ENCODE measurements at regions of chr16 and their contacts with region 1.

Region 1: DNA sequence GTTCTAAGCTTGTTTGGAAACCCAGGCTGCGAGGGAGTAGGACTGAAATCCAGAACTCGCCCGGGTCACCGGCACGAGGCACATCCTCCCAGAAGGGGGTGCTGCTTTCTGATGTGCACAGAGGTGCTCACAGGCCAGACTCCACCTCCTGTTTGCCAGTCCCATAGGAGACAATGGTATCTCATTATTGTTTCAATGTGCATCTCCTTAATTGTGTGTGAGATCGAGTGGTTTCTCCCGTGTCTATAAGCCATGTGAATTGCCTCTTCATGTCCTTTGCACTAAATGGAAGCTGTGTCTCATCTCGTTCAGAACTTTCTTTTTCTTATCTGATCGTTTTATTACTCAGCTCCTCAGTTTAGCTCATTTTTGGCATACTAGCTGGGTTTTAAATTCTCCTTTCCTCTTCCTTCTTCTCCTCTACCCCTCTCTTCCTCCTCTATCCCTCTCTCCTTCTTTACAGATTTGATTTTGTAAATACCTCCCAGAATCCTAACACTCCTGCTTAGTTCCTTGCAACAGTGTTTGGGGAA is 32.1 kb upstream of the PRKCB start:
- DNase-seq: no peak
- H3K4me3 ChIP-seq: no peak overlapping the region
- CTCF ChIP-seq: peak; percentile 33

Region 2: DNA sequence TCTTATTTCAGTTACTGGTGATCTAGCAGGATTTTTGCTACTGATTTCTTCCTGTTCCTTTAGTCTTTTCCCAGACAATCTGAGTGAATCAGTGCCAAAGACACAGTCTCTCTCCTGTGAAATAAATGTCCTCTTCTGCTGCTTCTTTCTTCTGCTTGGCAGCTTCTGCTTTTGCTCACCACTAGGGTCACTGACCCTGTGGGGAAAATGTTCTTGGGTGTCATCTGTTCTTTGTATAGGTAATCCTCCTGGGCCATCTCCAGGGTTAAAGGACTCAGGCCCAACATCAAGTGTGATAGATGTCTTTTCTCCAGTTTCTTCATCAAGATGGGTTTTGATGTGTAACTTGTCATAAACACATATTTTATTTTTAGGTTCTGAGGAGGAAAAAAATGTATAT is 167.7 kb before region 1 on chr16:
- CTCF ChIA-PET with region 1: no interaction called
- POLR2A ChIA-PET with region 1: no interaction called
- DNase-seq: no peak
- H3K4me3 ChIP-seq: no peak overlapping the region
- CTCF ChIP-seq: no peak

Region 3: GRCh38 chr16:24010440-24011089 is 206.9 kb after region 1 on chr16:
- CTCF ChIA-PET with region 1: interaction called, 15 read pairs
- POLR2A ChIA-PET with region 1: interaction called, 3 read pairs
- DNase-seq: peak; percentile 3
- H3K4me3 ChIP-seq: no peak overlapping the region
- CTCF ChIP-seq: peak; percentile 53

Region 4: GRCh38 chr16:24036614-24037013 is 233.0 kb after region 1 on chr16:
- CTCF ChIA-PET with region 1: interaction called, 39 read pairs
- POLR2A ChIA-PET with region 1: no interaction called
- DNase-seq: no peak
- H3K4me3 ChIP-seq: no peak overlapping the region
- CTCF ChIP-seq: peak; percentile 75

Region 5: DNA sequence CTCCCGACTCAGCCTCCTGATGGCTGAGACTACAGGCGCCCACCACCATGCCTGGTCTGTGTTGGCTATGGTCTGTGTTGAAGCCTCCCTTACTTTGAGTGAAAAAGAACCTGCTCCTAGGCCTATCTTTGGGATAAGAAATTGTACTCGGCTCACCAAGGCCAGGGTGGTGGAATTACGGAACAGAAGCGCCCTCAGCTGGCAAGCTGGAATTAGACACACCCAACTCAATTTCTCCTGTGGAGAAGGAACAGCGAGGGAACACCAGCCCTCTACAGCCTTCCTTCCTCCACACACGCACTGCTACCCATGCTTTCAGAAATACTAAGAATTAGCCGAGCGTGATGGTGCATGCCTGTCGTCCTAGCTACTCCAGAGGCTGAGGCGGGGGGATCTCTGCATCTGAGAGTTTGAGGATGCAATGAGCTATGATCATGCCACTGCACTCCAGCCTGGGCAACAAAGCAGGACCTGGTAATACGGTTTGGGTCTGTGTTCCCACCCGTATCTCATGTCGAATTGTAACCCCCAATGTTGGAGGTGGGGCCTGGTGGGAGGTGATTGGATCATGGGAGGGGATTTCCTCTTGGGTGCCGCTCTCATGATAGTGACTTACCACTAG is 695.6 kb after region 1 on chr16:
- CTCF ChIA-PET with region 1: interaction called, 21 read pairs
- POLR2A ChIA-PET with region 1: no interaction called
- DNase-seq: no peak
- H3K4me3 ChIP-seq: no peak overlapping the region
- CTCF ChIP-seq: peak; percentile 41